Activated T-helper 1 cell treated with anti-CD3 and anti-CD28 coated beads, Interleukin-12 subunit alpha, Interleukin-12 subunit beta, Interleukin-2, Interleukin-4 antibody, amounts not matched to agents 30 ng/mL and 10 ng/mL and 1 ng/mL, durations not matched to agents 14 hours and 24 hours and 36 hours (primary cell): ENCODE measurements at regions of chr2 and their contacts with region 1.

Region 1: DNA sequence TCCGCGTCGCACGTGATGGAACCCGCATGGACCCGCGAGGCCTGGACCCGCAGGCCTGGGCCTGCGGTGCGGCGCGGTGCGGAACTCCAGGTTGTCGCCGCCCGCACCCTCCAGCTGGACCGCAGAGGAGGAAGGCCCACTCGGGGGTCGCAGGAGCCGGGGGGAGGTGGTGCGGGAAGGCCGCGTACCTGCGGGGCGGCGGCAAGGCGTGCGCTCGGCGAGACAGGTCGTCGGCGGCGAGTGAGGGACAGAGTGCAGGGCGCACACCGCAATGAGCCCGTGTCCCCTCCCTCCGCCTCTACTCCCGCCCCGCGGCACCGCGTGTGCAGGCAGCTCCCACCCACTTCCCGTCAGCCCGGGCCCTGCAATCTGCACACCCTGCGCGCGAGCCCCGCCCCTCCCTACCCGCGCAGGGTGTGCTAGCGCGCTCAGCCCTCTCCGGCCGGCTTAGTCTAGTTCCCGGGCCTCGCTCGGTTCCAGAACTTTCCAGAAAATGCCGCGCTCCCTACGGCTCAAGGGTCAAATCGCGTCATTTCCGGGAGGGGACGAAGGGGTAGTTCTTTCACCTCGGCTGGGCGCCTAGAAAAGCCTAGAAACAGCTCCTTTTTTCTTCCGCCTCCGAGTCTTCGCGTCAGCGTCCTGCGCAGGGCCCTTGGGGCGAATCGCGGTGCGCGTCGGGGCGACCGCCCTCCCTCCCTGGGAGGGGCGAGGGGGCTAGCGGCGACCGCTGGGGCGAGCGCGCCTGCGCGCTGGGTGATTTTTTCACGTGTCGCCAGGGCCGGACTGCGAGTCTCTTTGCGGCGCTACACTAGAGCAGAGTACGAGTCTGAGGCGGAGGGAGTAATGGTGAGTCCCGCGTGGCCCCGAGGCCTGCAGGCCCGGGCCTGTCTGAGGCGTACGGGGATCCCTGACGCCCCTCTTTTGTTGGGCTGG is at the starts of genes HSPD1 and HSPE1:
- DNase-seq: peak; percentile 98
- H3K4me3 Mint-ChIP-seq: peak within 1 kb of the TSS; percentile 100
- H3K27ac Mint-ChIP-seq: peak within 1 kb of the TSS; percentile 99
- H3K4me1 Mint-ChIP-seq: peaks cover 50% of the 10 kb centered on the region
- H3K27me3 Mint-ChIP-seq: no peaks in the 10 kb centered on the region
- total RNA-seq, gene HSPD1: 811 and 821 TPM in 2 replicates
- total RNA-seq, gene HSPE1: 325 and 343 TPM in 2 replicates

Region 2: DNA sequence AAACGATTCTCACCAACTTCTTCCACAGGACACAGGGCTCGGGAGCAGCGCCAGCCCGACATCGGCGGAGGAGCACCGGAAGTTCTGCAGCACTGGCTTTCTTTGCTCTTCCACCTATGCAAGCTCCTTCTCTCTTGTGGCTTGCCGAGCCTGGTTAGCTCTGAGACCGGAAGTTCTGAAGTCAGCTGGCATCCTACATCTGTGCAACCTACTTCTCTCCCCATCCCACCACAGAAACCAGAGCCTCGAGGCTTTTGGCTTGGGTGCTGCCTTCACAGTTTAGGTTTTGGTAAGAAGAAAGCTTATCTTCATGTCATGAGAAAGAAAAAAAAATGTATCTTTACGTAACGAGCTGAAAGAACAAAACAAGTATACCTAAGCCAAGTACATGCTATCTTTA is 301.0 kb before region 1 on chr2:
- intact Hi-C with region 1: loop called (anchors 2 kb)
- DNase-seq: peak; percentile 90
- H3K4me3 Mint-ChIP-seq: peak overlapping the region; percentile 87
- H3K27ac Mint-ChIP-seq: peak overlapping the region; percentile 98
- H3K4me1 Mint-ChIP-seq: peaks cover 91% of the 10 kb centered on the region
- H3K27me3 Mint-ChIP-seq: peaks cover 2% of the 10 kb centered on the region

Region 3: GRCh38 chr2:197322724-197323720 is 176.8 kb before region 1 on chr2:
- intact Hi-C with region 1: no loop called
- DNase-seq: no peak
- H3K4me3 Mint-ChIP-seq: peak overlapping the region; percentile 71
- H3K27ac Mint-ChIP-seq: peak overlapping the region; percentile 87
- H3K4me1 Mint-ChIP-seq: peaks cover 50% of the 10 kb centered on the region
- H3K27me3 Mint-ChIP-seq: no peaks in the 10 kb centered on the region

Region 4: DNA sequence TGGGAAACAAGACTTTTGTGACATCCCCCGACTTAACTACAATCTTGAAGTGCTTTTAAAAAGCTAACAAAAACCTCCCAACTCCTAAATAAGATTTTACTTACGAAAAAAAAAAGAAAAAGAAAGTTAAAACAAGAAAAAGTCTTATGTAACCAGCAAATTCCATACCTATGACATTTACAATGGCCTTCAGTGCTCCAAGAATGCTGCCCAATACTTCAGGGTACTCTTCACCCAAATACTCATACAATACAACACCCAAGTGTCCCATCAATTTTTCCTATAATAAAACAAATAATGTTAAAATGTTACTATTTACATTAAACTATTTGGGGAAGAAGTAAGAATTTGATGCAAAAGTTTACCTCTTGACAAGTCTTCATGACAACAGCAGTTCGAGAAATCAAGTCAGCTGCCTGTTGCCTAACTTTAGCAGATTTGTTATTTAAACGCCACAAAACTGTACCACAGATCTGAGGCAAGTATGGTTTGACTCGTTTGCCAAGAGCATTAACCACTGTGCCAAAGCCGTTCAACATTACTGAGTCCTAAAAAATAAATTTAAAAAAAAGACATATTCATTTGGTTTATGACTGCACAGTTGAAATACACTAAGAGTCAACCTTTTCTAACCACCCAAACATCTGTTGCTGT is 99.8 kb before region 1 on chr2:
- intact Hi-C with region 1: loop called (anchors 5 kb)
- DNase-seq: no peak
- H3K4me3 Mint-ChIP-seq: no peak overlapping the region
- H3K27ac Mint-ChIP-seq: no peak overlapping the region
- H3K4me1 Mint-ChIP-seq: no peaks in the 10 kb centered on the region
- H3K27me3 Mint-ChIP-seq: no peaks in the 10 kb centered on the region

Region 5: DNA sequence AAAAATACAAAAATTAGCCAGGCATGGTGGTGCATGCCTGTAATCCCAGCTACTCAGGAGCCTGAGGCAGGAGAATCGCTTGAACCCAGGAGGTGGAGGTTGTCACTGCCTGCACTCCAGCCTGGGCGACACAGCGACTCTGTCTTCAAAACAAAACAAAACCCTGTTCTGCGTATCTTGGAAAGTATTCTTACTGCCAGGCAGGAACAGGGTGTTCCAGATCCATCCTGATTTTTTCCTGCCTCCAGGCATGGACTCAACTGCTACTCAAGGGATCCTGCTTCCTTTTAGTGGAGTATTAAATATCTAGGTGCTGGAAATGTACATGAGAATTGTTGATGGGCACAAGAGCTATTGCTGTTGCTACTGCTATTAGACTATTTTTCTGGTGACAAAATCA is 12.5 kb before region 1 on chr2:
- intact Hi-C with region 1: loop called (anchors 1 kb)
- DNase-seq: no peak
- H3K4me3 Mint-ChIP-seq: no peak overlapping the region
- H3K27ac Mint-ChIP-seq: no peak overlapping the region
- H3K4me1 Mint-ChIP-seq: peaks cover 14% of the 10 kb centered on the region
- H3K27me3 Mint-ChIP-seq: no peaks in the 10 kb centered on the region

Region 6: DNA sequence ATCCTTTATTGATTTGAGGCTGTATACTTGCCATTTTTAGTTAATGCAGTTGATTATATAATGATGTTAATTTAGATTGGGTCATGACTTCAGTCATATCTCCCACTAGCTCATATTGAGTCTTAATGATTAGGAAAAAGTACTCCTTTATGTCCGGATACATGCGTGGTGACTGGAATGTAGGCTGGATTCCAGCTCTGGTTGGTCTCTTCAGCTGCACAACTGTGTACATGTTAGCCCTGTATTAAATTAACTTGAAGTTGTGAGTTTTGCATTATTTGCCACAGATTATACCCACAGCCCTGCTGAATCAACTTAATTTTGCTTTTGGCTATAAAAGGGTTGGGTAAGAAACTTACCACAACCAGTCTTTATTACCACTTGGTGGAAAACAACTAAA is 38.6 kb after region 1 on chr2:
- intact Hi-C with region 1: no loop called
- DNase-seq: no peak
- H3K4me3 Mint-ChIP-seq: no peak overlapping the region
- H3K27ac Mint-ChIP-seq: no peak overlapping the region
- H3K4me1 Mint-ChIP-seq: peaks cover 28% of the 10 kb centered on the region
- H3K27me3 Mint-ChIP-seq: no peaks in the 10 kb centered on the region

Region 7: GRCh38 chr2:197620133-197620532 is 120.3 kb after region 1 on chr2:
- intact Hi-C with region 1: no loop called
- DNase-seq: no peak
- H3K4me3 Mint-ChIP-seq: no peak overlapping the region
- H3K27ac Mint-ChIP-seq: no peak overlapping the region
- H3K4me1 Mint-ChIP-seq: no peaks in the 10 kb centered on the region
- H3K27me3 Mint-ChIP-seq: peaks cover 4% of the 10 kb centered on the region

Region 8: DNA sequence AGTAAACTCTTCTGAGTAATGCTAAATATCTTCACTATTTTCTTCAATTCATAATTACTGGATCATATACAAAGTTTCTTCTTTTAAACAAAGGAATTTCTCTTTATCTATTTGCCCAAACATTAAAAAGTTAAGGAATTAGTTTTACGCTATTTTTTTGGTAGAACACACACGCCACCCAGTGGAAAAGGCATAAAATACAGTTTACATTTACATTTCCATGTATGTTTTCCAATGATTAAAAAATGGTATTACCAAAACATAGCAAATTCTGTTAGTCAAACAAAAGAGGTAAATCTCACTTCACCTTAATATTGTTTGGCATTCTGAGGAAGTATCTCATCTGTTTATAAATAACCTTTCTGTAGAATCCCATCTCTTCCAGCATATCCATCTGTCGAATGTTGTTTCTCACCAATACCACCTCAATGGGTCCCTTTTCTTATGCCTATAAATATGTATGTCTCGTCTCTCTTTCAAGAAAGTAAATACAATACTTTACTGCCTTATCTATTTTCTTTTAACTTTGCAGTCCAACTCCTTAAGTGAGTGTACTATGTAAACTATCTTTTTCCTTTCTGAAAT is 278.1 kb after region 1 on chr2:
- intact Hi-C with region 1: loop called (anchors 2 kb)
- DNase-seq: peak; percentile 6
- H3K4me3 Mint-ChIP-seq: no peak overlapping the region
- H3K27ac Mint-ChIP-seq: no peak overlapping the region
- H3K4me1 Mint-ChIP-seq: no peaks in the 10 kb centered on the region
- H3K27me3 Mint-ChIP-seq: peaks cover 10% of the 10 kb centered on the region